Endothelial cell of umbilical vein (primary cell): ENCODE measurements at regions of chr11 and their contacts with region 1.

Region 1: GRCh38 chr11:124070915-124071635 is 29.9 kb upstream of the OR10G7 start:
- DNase-seq: peak; percentile 88
- H3K4me3 ChIP-seq: no peak overlapping the region
- H3K27ac ChIP-seq: no peak overlapping the region
- H3K4me1 ChIP-seq: peaks cover 4% of the 10 kb centered on the region
- H3K27me3 ChIP-seq: peaks cover 15 to 33% of the 10 kb centered on the region in 2 experiments
- CTCF ChIP-seq: peak; percentile 56 to 57
- POLR2A ChIP-seq: no peak

Region 2: DNA sequence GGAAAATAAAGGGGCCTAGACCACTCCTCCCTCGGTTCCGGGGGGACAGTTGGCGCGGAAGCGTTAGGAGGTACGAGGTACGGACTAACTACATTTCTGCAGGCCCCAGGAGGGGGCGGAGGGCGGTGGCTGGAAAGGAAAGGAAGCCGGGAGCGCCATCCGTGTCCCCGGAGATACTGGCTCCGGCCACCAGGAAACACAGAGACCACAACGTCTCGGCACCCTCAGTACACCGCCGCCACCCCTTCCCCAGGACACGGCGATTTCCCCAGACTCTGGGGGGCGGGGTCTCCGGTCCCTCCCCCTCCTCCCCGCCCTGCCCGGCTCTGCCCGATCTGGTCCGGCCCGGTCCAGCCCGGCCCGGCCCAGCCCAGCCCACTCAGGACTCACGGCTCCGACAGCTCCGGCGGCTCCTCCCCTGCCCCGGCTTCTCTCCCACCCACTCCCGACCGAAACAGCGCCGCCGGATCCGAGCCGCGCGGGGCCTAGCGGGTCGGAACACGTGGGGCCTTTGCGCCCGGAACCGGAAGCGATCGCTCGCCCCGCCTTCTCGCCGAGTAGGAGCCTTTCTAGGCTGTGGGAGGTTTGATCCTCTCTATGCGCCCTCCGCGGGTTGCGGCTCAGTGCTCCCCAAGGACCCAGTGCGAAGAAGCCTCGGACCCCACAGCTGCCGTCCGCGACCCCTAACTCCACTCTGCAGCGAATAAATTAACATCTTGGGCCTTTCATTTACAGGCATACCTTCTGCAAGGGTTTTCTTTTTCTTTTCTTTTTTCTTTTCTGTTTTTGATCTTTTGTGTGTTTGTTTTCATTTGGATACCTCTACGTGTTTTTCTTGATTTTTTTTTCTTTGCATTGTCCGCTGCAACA is 329.7 kb before region 1 on chr11 and contains the start of gene ZNF202:
- CTCF ChIA-PET with region 1: interaction called, 5 read pairs
- POLR2A ChIA-PET with region 1: no interaction called
- dilution Hi-C with region 1: no loop called
- intact Hi-C with region 1: loop called (anchors 1 kb)
- DNase-seq: peak; percentile 91
- H3K4me3 ChIP-seq: peak within 1 kb of the TSS; percentile 58 to 89 (median 64)
- H3K27ac ChIP-seq: peak within 1 kb of the TSS; percentile 10
- H3K4me1 ChIP-seq: peaks cover 14% of the 10 kb centered on the region
- H3K27me3 ChIP-seq: peaks cover 0 to under 1% of the 10 kb centered on the region in 2 experiments
- CTCF ChIP-seq: peak in 1 of 2 donors; percentile 0
- POLR2A ChIP-seq: peak; percentile 81
- total RNA-seq, gene ZNF202: 12.3 and 13.1 TPM in 2 replicates

Region 3: DNA sequence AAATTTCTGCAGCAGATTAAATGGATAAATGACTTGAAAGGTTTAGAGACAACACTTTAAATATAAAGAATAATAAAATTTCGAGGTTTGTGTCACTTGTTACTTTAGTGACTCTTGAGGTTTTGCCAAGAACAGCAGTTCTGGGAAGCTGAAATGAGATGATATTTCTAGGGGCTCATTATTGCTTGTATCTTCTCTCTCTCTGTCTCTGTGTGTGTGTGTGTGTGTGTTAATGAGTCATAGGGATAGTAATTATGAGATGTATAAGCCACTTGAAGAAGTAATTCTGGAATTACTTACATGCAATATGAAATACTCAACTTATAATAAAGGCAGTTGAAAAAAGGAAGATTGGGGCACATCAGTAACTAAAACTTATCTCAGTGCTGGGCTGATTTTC is 20.3 kb before region 1 on chr11:
- CTCF ChIA-PET with region 1: interaction called, 10 read pairs
- POLR2A ChIA-PET with region 1: no interaction called
- dilution Hi-C with region 1: no loop called
- intact Hi-C with region 1: no loop called
- DNase-seq: no peak
- H3K4me3 ChIP-seq: no peak overlapping the region
- H3K27ac ChIP-seq: no peak overlapping the region
- H3K4me1 ChIP-seq: no peaks in the 10 kb centered on the region
- H3K27me3 ChIP-seq: no peaks in the 10 kb centered on the region
- CTCF ChIP-seq: no peak
- POLR2A ChIP-seq: no peak

Region 4: DNA sequence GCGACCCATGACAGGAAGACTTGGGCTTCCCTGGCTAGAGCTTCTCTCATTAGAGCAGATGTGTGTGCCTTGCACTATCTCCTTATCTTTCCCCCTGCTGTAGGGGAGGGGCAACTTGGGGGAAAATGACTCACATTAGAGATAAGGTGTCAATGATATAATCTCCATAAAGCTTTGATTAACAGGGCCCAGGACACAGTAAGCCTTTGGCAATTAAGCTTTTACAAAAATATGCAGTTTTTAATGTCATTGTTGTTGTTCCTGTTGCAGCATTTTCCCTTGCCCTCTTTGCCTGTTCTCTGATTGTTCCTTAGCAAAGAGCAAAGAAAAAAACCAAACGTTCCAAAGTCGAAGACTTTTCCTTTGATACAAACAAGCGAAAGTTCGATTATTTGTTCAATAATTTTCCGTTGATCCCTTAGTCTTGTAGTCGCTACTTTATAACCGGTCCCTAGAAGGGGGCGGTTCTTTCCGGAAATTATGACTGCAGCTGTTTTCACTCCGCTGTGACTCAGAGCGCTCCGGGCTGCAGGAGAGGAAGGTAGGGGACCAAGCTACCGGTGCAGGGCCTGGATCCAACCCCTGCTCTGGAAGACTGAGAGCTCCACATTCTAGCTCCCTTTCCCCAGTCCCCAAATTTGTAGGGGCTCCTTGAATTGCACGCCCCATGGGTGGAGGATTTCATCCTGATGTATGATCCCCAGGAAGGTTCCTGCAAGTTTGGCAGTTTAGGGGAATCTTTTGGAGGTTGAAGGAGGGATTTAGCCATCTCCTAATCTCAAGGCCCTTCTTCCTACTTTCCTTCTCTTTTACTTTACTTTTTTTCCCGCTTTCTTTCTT is 44.1 kb after region 1 on chr11 and contains the start of gene VWA5A:
- CTCF ChIA-PET with region 1: interaction called, 19 read pairs
- POLR2A ChIA-PET with region 1: interaction called, 5 read pairs
- dilution Hi-C with region 1: no loop called
- intact Hi-C with region 1: loop called (anchors 1 kb)
- DNase-seq: peak; percentile 86
- H3K4me3 ChIP-seq: peak within 1 kb of the TSS; percentile 54 to 94 (median 75)
- H3K27ac ChIP-seq: peak within 1 kb of the TSS; percentile 52
- H3K4me1 ChIP-seq: peaks cover 19% of the 10 kb centered on the region
- H3K27me3 ChIP-seq: no peaks in the 10 kb centered on the region
- CTCF ChIP-seq: no peak
- POLR2A ChIP-seq: peak; percentile 88
- total RNA-seq, gene VWA5A: 11.6 and 14.3 TPM in 2 replicates

Region 5: DNA sequence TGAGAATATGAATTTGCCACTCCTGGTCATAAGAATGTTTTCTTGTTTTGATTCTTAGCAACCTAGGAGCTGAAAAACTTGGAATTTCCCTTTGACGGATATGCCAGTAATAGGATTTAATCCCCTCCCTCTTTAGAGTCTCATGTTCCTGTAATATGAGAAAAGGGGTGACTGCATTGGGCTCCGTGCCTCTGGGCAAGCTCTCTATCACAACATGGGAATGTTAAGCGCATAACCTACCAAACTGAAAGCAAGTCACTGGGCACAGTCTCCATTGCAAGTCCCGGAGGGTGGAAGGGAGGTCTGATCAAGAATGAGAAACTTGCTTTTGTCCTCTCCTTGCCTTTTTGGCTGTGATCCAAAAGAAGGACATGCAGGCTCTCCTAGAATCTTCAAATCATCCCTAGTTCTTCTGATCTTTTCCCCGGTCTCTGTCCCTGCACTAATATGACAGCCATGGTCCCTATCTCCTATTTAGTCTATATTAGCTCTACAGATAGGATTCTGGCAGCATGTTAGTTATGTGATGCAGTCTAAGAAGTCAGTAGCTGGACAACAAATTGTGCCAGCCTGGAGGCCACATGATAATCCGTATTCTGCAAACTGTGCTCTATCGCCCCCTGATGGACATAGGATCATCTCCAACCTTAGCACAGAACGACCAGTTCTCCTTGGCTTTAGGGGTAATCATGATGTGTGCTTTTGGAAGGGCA is 123.8 kb after region 1 on chr11:
- CTCF ChIA-PET with region 1: interaction called, 363 read pairs
- POLR2A ChIA-PET with region 1: no interaction called
- dilution Hi-C with region 1: no loop called
- intact Hi-C with region 1: loop called (anchors 1 kb)
- DNase-seq: peak; percentile 79
- H3K4me3 ChIP-seq: no peak overlapping the region
- H3K27ac ChIP-seq: no peak overlapping the region
- H3K4me1 ChIP-seq: no peaks in the 10 kb centered on the region
- H3K27me3 ChIP-seq: peaks cover 6 to 7% of the 10 kb centered on the region in 2 experiments
- CTCF ChIP-seq: peak; percentile 75 to 79
- POLR2A ChIP-seq: no peak

Region 6: DNA sequence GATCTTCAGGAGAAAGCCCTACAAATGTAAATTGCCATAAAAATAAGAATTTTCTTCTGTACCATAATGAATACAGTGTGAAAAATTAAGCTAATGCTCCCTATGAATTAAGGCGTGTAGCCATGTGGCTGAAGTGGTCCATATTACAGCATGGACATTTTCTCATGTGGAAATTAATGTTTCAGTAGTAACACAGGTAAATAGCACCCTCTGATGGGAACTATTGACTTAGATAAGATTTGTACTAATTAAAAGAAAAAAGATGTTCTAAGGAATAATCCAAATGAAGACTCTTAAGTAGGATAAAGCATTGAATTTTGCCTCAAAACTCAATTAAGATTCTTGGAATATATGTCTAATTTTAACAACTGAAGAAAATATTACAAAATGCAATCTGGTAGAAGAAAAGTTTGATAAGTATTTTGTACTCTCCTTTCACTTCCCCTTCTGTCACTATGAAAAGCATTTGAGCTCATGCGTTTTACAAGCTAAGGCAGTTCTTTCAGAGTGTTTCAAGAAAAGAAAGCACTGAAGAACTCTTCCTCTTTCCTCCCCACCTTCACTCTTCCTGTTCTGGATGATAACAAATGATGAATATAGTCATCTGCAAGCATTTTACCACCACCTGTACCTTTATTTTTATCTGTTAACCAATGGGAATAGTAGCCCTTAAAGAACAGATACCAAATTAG is 258.9 kb after region 1 on chr11:
- CTCF ChIA-PET with region 1: interaction called, 41 read pairs
- POLR2A ChIA-PET with region 1: no interaction called
- dilution Hi-C with region 1: no loop called
- intact Hi-C with region 1: loop called (anchors 1 kb)
- DNase-seq: peak; percentile 20
- H3K4me3 ChIP-seq: no peak overlapping the region
- H3K27ac ChIP-seq: no peak overlapping the region
- H3K4me1 ChIP-seq: no peaks in the 10 kb centered on the region
- H3K27me3 ChIP-seq: peaks cover 5 to 11% of the 10 kb centered on the region in 2 experiments
- CTCF ChIP-seq: no peak
- POLR2A ChIP-seq: no peak

Region 7: DNA sequence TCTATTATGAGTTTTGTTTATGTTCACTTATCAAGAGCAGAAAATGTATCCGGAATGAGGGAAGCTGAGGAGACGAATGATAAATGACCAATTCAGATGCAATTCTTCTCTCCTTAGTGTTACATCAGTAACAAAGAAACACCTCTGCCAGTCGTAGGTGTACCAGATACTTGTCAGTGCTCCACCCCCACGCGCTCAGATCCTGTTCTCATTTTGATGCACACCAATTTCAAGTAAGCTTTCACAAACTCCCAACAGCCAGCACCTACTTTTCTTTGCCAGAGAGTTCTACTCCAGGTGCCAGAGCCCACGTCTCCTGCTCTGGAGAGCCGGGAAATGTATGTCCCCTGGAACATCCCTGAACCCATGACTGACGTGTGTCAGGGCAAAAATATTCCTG is 428.6 kb after region 1 on chr11:
- CTCF ChIA-PET with region 1: no interaction called
- POLR2A ChIA-PET with region 1: no interaction called
- dilution Hi-C with region 1: no loop called
- intact Hi-C with region 1: no loop called
- DNase-seq: no peak
- H3K4me3 ChIP-seq: no peak overlapping the region
- H3K27ac ChIP-seq: no peak overlapping the region
- H3K4me1 ChIP-seq: no peaks in the 10 kb centered on the region
- H3K27me3 ChIP-seq: peaks cover 0 to 2% of the 10 kb centered on the region in 2 experiments
- CTCF ChIP-seq: no peak
- POLR2A ChIP-seq: no peak

Region 8: DNA sequence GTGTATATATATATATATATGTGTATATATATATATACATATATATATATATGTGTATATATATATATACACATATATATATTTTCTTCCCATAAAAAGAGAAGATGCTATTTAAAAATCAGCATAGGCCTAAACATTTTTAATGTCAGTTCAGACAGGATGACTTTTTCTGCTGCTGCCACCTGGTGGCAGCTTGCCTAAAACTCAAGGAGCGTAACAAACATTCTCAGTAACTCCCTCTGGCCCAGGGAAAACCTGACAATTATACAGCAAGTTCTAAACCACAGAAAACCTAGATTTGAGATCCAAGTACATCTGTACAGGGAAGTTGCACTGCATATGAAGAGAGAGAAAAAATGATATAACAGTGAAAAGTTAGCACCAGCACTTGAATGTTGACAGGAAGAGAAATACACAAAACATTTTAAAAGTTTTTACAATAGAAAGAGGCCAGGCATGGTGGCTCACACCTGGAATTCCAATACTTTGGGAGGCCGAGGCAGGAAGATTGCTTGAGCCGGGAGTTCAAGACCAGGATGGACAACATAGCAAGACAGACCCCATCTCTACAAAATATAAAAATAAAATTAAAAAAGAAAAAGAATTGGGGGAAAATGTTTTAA is 515.3 kb after region 1 on chr11:
- CTCF ChIA-PET with region 1: interaction called, 15 read pairs
- POLR2A ChIA-PET with region 1: no interaction called
- dilution Hi-C with region 1: no loop called
- intact Hi-C with region 1: loop called (anchors 5 kb)
- DNase-seq: peak; percentile 59
- H3K4me3 ChIP-seq: no peak overlapping the region
- H3K27ac ChIP-seq: no peak overlapping the region
- H3K4me1 ChIP-seq: no peaks in the 10 kb centered on the region
- H3K27me3 ChIP-seq: peaks cover 7 to 16% of the 10 kb centered on the region in 2 experiments
- CTCF ChIP-seq: peak; percentile 52 to 57
- POLR2A ChIP-seq: no peak